Heart left ventricle (tissue), 16 donors: ENCODE measurements at regions of chr5 and their contacts with region 1.

Region 1: DNA sequence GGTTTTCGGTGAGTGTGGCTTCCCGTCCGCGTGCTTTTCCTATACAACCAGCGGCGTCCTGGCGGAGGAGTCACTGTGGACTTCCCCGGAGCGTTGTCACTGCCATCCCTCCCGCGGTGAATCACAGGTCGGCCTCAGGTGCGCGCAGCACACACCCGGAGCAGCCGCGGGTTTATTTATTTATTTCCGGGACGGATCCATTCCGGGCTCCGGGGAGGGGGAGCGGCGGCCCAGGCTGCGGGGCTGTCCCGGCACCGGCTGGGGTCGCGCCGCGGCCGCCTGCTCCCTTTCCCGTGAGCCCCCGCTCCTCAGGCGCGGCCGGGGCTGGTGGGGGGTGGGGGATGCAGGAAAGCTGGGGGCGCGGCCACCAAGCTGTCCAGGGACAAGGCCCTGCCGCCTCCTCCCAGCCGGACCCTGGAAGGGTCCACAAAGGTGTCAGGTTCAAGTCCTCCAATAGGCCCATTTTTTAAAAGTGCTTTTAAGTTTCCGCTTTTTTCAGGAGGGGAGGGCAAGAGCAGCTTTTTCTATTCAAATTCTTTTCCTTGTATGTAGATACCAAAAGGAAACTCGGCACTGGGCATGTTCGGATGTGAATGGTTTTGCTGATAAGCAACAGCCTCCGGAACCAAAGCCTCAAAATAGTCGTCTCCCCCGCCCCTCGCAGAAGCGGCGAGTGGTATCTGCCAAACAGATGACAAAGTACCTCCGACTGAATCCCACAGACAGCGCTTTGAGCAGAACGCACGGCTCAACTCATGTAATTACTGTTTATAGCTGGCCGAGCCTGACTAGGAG is 192.5 kb downstream of the CD180 start:
- DNase-seq: peak; percentile 86 to 94 (median 91)
- ATAC-seq: peak; percentile 85 to 93 (median 92)
- H3K4me3 ChIP-seq: peak overlapping the region; percentile 30 to 69 (median 62)
- H3K27ac ChIP-seq: peak overlapping the region; percentile 83 to 95 (median 90)
- H3K4me1 ChIP-seq: peaks cover 0 to 56% (median 39%) of the 10 kb centered on the region in 12 donors
- H3K27me3 ChIP-seq: no peaks in the 10 kb centered on the region
- CTCF ChIP-seq: peak in 1 of 12 donors; percentile 10
- POLR2A ChIP-seq: peak in 1 of 2 donors; percentile 78

Region 2: GRCh38 chr5:66717455-66718373 is 286.4 kb before region 1 on chr5:
- intact Hi-C with region 1: no loop called
- DNase-seq: peak in 3 of 5 donors; percentile 25 to 59 (median 50)
- ATAC-seq: peak; percentile 44 to 89 (median 72)
- H3K4me3 ChIP-seq: no peak overlapping the region
- H3K27ac ChIP-seq: peak overlapping the region in 11 of 12 donors; percentile 5 to 85 (median 47)
- H3K4me1 ChIP-seq: peaks cover 9 to 28% (median 20%) of the 10 kb centered on the region in 12 donors
- H3K27me3 ChIP-seq: no peaks in the 10 kb centered on the region
- CTCF ChIP-seq: no peak
- POLR2A ChIP-seq: no peak

Region 3: DNA sequence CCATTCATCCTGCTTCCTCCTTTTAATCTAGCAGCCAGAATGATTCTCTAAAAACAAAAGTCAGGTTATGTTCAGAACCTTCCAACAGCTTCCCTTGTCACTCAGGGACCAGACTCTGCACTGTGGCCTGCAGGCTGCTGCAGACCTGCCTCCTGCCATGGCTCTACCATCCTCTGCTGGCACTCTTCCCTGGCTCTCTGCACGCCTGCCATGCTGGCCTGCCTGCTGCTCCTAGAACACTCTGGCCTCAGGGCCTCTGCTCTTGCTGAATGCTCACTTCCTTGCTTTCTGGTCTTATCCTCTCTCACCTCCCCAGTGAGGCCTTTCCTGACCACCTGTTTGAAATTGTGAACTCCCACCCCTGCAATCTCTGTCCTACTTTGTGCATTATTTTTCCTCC is 43.0 kb after region 1 on chr5:
- intact Hi-C with region 1: loop called in 5 of 10 experiments (anchors 5 kb)
- DNase-seq: peak; percentile 66 to 86 (median 78)
- ATAC-seq: peak; percentile 67 to 94 (median 88)
- H3K4me3 ChIP-seq: no peak overlapping the region
- H3K27ac ChIP-seq: peak overlapping the region in 11 of 12 donors; percentile 4 to 60 (median 28)
- H3K4me1 ChIP-seq: peaks cover 11 to 78% (median 49%) of the 10 kb centered on the region in 12 donors
- H3K27me3 ChIP-seq: no peaks in the 10 kb centered on the region
- CTCF ChIP-seq: no peak
- POLR2A ChIP-seq: no peak

Region 4: DNA sequence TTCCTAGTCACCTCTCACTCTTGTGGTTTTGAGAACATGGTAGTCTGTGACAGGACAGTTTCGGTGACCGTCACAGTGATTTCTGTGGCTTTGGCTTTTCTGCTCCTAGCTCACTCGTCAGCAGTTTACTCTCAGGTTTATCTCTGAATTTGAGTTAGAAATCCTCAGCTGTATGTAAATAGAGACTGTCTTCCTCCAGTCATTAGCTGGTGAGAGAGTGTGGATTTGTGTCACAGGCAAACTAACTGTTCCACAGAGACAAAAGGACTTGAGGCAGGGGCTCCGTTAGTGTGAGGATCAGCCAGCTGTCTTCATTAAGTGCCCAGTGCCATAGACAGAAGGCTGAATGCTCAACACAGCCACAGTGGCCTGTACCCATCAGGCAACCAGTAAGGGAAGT is 61.1 kb after region 1 on chr5:
- intact Hi-C with region 1: loop called in 1 of 10 experiments (anchors 10 kb)
- DNase-seq: no peak
- ATAC-seq: peak in 1 of 4 donors; percentile 27
- H3K4me3 ChIP-seq: no peak overlapping the region
- H3K27ac ChIP-seq: peak overlapping the region in 4 of 12 donors; percentile 0 to 33 (median 16)
- H3K4me1 ChIP-seq: peaks cover 0 to 74% (median 31%) of the 10 kb centered on the region in 12 donors
- H3K27me3 ChIP-seq: no peaks in the 10 kb centered on the region
- CTCF ChIP-seq: no peak
- POLR2A ChIP-seq: no peak

Region 5: DNA sequence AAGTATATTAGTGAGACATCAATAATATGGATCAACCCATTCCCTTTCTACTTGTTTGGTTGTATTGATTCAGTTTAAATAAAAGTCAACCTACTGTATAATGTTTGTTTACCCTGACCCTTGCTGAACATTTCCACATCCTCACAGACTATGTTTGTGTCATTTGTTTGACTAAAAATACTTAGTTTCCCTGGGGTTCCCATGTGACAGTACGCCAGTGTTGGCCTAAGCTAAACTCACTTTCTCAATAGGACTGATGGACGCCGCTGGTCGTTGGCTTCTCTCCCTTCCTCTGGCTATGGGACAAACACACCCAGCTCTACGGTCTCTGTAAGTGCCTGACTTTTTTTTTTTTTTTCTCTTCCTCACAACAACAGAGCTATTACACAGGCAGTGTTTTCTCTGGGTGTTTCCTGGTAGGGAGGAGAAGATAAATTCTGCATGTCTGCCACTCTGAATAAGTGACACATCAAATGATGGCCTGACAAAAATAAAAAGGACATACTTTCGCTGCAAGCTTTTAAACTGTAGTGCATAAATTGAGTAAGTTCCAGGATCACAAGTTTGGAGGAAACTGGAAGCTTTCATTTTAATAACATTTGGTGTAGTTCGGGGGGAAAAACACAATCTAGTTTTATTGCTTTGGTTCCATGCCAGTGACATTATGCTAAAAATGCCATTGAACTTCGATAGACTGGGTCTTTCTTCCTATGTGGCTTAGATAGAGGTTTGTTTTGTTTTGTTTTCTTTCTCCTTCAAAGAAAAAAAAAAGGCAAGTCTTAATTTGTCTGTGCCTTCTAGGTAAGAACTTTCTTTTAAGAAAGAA is 91.4 kb after region 1 on chr5:
- intact Hi-C with region 1: loop called in 9 of 10 experiments (anchors 2 to 10 kb)
- DNase-seq: peak; percentile 73 to 84 (median 84)
- ATAC-seq: peak; percentile 93 to 98 (median 96)
- H3K4me3 ChIP-seq: peak overlapping the region in 8 of 12 donors; percentile 16 to 43 (median 28)
- H3K27ac ChIP-seq: peak overlapping the region; percentile 63 to 83 (median 76)
- H3K4me1 ChIP-seq: peaks cover 2 to 63% (median 47%) of the 10 kb centered on the region in 12 donors
- H3K27me3 ChIP-seq: no peaks in the 10 kb centered on the region
- CTCF ChIP-seq: no peak
- POLR2A ChIP-seq: no peak

Region 6: GRCh38 chr5:67549296-67549618 is 545.1 kb after region 1 on chr5:
- intact Hi-C with region 1: no loop called
- DNase-seq: no peak
- ATAC-seq: peak in 1 of 4 donors; percentile 33
- H3K4me3 ChIP-seq: no peak overlapping the region
- H3K27ac ChIP-seq: no peak overlapping the region
- H3K4me1 ChIP-seq: peaks cover 0 to 10% (median 0%) of the 10 kb centered on the region in 12 donors
- H3K27me3 ChIP-seq: no peaks in the 10 kb centered on the region
- CTCF ChIP-seq: no peak
- POLR2A ChIP-seq: no peak